ENCODE measurements at regions of chr3 and their contacts with region 1.

Region 1: DNA sequence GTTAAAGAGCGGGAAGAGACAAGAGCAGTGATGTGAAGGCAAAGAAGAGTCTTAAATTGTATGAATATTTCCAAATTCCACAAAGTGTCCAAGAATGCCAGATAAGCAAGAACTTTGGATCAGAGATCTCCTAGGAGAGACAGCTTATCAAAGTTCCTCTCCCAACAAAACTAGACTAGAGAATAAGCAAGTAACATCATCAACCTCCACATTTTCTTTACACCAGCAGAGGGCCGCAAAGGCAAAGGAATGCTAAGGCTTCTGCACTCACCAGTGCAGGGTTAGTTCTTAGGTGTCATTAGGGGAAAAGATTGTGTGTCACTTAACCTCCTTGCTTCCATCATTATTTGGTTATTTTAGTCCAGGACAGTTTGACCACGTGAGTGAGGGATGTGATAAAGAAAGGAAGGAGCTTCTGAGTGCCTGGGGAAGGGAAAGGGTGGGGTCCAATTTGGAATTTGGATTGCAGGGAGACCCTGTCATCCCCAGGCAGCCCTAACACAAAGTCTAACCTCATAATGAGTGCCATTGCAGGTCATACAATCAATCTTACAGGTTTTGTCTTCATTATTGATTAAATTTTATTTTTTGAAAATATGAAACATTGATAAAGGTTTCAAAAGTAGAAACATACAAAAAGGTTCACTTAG is 7.5 kb upstream of the CMTM6 start:
- DNase-seq: peak; percentile 51
- H3K4me3 Mint-ChIP-seq: no peak overlapping the region
- H3K27ac Mint-ChIP-seq: no peak overlapping the region
- H3K4me1 Mint-ChIP-seq: no peaks in the 10 kb centered on the region
- H3K27me3 Mint-ChIP-seq: peaks cover 4% of the 10 kb centered on the region

Region 2: GRCh38 chr3:32593903-32594525 is 83.8 kb after region 1 on chr3:
- intact Hi-C with region 1: loop called (anchors 2 kb)
- DNase-seq: no peak
- H3K4me3 Mint-ChIP-seq: no peak overlapping the region
- H3K27ac Mint-ChIP-seq: no peak overlapping the region
- H3K4me1 Mint-ChIP-seq: no peaks in the 10 kb centered on the region
- H3K27me3 Mint-ChIP-seq: peaks cover 27% of the 10 kb centered on the region

Region 3: GRCh38 chr3:32667122-32667521 is 156.9 kb after region 1 on chr3:
- intact Hi-C with region 1: loop called (anchors 1 kb)
- DNase-seq: no peak
- H3K4me3 Mint-ChIP-seq: no peak overlapping the region
- H3K27ac Mint-ChIP-seq: no peak overlapping the region
- H3K4me1 Mint-ChIP-seq: no peaks in the 10 kb centered on the region
- H3K27me3 Mint-ChIP-seq: peaks cover 14% of the 10 kb centered on the region

Measured in activated T-helper 2 cell treated with anti-CD3 and anti-CD28 coated beads, Interferon-gamma antibody, Interleukin-2, Interleukin-4, amounts not matched to agents 10 μg/mL and 5 μg/mL and 100 μg/mL, durations not matched to agents 14 hours and 24 hours and 36 hours (primary cell).